ENCODE measurements at regions of chr6 and their contacts with region 1.

Region 1: DNA sequence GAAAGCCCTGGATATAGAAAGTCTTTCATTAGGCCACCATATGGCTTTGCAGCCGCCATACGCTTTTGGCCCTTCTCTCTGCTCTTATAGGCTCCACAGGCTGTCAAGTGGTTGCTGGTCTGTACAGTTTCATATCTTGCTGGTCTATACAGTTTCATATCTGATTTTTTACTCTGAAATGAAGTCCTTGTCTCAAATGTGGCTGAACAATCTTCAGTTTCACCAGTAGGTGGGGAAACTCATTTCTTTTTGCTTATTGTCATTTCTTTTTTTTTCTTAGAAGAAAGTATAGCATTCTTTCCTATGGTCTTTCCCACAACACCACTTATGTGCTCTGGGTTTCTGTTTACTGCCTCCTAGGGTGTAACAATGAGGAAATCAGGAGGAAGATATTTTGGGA is 771.4 kb upstream of the MMS22L start:
- DNase-seq: no peak
- H3K4me3 ChIP-seq: no peak overlapping the region
- H3K27ac ChIP-seq: no peak overlapping the region
- H3K4me1 ChIP-seq: no peaks in the 10 kb centered on the region
- H3K27me3 ChIP-seq: no peaks in the 10 kb centered on the region
- CTCF ChIP-seq: no peak
- POLR2A ChIP-seq: no peak

Region 2: DNA sequence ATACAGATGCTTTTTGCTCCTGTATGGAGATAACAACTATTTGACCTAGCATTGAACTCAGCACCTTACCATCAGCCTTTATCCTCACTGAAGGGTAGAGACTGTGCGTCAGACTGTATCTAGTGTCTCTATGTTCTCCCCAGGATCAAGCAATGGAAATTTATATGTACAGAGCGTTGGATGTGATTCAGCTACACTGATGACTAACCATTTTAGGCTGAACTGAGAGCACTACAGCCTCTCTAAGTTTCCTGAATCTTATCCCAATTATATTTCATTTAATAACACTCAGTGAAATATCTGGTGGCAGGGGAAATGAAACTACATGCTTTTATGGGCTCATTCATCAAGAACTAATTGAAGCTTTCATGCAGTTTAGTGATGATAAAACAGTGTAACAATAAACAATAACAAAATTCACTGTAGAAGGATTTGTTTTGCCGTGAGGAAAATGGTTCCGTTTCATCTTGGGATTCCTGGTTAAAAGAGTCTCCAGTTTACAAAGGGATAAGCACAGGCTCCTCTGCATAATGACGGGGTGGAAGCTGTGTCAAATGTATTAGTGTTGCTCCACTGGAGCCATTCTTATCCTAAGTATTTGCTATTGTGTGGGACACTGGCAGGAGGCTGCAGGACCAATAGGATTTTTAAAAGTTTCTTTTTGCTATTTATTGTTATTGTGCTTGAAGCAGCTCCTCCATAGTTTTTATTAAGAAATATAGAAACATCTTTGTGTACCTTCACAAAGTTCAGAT is 203.8 kb before region 1 on chr6:
- intact Hi-C with region 1: no loop called
- DNase-seq: no peak
- H3K4me3 ChIP-seq: no peak overlapping the region
- H3K27ac ChIP-seq: no peak overlapping the region
- H3K4me1 ChIP-seq: no peaks in the 10 kb centered on the region
- H3K27me3 ChIP-seq: no peaks in the 10 kb centered on the region
- CTCF ChIP-seq: no peak
- POLR2A ChIP-seq: no peak

Region 3: DNA sequence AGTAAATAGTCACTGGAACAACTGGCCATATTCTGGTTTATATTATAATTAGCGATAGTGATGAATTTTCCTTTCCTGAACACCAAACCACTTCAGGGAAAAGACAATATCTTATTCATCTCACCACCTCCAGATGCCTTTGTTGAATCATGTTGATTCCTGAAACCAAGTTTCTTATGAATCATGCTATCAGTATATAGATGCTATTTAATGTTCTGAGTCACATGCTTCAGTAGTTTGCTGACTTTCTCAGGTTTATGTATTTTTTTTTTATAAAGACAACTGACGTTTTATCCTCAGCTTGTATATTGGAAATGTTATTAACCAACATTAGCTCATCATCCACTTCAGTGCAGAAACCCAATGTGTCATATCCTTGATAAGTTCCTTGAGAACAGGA is 69.7 kb after region 1 on chr6:
- intact Hi-C with region 1: loop called (anchors 2 kb)
- DNase-seq: no peak
- H3K4me3 ChIP-seq: no peak overlapping the region
- H3K27ac ChIP-seq: no peak overlapping the region
- H3K4me1 ChIP-seq: no peaks in the 10 kb centered on the region
- H3K27me3 ChIP-seq: no peaks in the 10 kb centered on the region
- CTCF ChIP-seq: no peak
- POLR2A ChIP-seq: no peak

Measured in vagina (tissue), 2 donors.